A549 (cell line): ENCODE measurements at regions of chr7 and their contacts with region 1.

Region 1: DNA sequence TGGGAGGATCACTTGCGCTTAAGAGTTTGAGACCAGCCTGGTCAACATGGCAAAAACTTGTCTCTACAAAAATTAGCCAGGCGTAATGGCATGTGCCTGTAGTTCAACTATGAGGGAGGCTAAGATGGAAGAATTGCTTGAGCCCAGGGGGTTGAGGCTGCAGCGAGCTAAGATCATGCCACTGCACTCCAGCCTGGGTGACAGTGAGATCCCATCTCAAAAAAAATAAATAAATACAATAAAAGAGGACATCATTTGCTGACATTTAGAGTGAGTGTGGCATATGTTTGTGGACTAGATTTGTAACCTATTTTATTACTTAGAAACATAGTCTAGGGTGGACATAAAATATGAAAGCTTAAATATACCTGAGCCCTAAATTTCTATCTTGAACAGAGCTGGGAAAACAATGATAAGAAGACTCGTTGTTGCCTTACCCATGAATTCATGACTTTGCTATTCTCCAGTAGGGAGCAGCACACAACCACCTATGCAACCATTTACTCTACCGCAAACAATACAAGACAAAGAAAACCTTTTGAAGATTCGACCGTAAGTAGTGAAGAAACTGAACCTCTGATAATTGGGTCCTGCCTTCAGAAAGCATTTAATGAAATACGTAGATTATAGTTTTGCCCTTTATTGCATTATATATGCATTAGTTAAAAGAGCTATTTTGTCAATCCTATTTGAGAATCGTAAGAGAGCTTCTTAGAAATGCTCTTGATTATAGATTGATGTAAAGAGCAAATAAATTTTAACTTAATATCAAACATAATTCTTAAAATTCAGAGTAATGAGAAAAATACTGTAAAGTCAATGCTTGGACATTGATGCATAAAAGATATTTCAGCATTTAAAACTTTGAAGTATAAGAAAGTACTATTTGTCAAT is 83.5 kb downstream of the GNAT3 start:
- DNase-seq: peak; percentile 28 to 79
- ATAC-seq: peak; percentile 96 to 97
- H3K4me3 ChIP-seq: no peak overlapping the region
- H3K27ac ChIP-seq: peak overlapping the region in 1 of 2 experiments; percentile 45; a peak in 1 of 6 replicates
- H3K4me1 ChIP-seq: peaks cover 13% of the 10 kb centered on the region; the same call in 2 of the 3 replicates
- CTCF ChIP-seq: peak; percentile 90
- EP300 ChIP-seq: no peak
- POLR2A ChIP-seq: no peak
- RAD21 ChIP-seq: peak; percentile 94 to 96

Region 2: DNA sequence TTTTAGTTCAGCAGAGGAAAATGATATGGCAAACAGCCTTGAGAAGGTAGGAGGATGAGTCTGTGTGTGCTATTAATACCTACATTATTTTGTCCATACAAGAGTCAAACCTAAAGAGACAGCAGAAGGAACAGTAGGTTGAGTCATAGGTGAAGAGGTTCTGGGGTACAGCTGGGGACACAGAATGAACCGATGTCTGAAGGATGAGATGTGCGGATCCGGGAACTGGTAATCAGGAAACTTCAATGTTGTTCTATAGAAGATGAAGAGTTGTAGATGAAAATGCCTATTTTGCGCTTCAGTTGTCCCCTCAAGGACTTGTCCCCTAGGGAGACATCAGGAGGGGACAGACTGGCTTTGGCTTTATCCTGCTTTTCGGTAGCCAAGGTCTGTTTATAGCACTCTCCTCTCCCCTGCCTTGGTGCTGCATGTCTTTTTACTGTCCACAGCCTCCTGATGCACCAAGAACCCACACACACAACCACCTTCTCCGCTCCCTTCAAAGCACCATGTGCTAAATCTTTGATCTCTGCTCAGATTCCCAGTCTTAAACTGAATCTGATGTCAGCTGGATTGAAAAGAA is 11.1 kb before region 1 on chr7:
- CTCF ChIA-PET with region 1: interaction called, 15 read pairs
- POLR2A ChIA-PET with region 1: no interaction called
- DNase-seq: no peak
- ATAC-seq: no peak
- H3K4me3 ChIP-seq: no peak overlapping the region
- H3K27ac ChIP-seq: no peak overlapping the region
- H3K4me1 ChIP-seq: 0 out of 3 replicates have a peak, but pooled peaks cover 3% of the 10 kb centered on the region
- CTCF ChIP-seq: no peak
- EP300 ChIP-seq: no peak
- POLR2A ChIP-seq: no peak
- RAD21 ChIP-seq: no peak

Region 3: DNA sequence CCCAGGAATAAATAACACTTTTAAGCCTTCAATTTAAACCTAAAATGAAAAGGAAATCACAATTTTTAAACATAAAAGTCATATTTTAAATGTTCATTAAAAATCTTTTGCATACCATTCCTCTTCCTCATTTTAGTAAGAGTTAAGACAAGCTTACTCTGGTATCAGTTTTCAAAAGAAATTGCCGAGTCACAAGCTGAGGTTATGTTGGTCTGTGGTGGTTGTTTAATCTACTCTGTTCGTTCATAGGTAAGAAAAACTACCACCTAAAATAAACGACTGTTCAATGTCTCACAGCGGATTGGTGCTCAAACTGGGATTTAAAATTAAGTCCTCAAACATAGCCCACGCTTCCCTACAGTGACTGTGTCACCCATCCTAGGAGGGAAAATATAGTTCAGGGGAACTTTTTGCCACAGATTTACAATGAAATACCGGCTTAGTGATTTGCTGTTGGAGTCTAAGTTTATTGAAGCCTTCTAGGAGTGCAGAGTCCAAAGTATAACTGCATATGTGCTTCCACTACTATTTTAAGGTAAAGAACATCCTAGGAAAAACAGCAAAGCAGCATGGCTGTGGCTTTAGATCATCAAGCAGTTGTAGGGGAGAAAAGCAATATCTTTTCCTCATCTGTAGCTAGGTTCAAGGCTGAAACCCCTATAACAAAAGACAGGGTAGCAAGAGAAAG is 22.4 kb after region 1 on chr7:
- CTCF ChIA-PET with region 1: interaction called, 18 read pairs
- POLR2A ChIA-PET with region 1: no interaction called
- DNase-seq: peak in 1 of 2 experiments; percentile 25
- ATAC-seq: no peak; a peak in 2 of 6 replicates
- H3K4me3 ChIP-seq: no peak overlapping the region
- H3K27ac ChIP-seq: peak overlapping the region; percentile 27 to 57; a peak in 5 of 6 replicates
- H3K4me1 ChIP-seq: peaks cover 16% of the 10 kb centered on the region
- CTCF ChIP-seq: no peak
- EP300 ChIP-seq: no peak
- POLR2A ChIP-seq: no peak
- RAD21 ChIP-seq: no peak

Region 4: GRCh38 chr7:80659120-80660055 is 231.0 kb after region 1 on chr7:
- CTCF ChIA-PET with region 1: interaction called, 44 read pairs
- POLR2A ChIA-PET with region 1: no interaction called
- DNase-seq: peak; percentile 26 to 30
- ATAC-seq: peak; percentile 47 to 60; a peak in 2 of 6 replicates
- H3K4me3 ChIP-seq: no peak overlapping the region
- H3K27ac ChIP-seq: peak overlapping the region; percentile 19 to 42; a peak in 2 of 6 replicates
- H3K4me1 ChIP-seq: peaks cover 5% of the 10 kb centered on the region; the same call in 2 of the 3 replicates
- CTCF ChIP-seq: peak; percentile 76
- EP300 ChIP-seq: no peak
- POLR2A ChIP-seq: no peak
- RAD21 ChIP-seq: peak; percentile 78 to 87

Region 5: GRCh38 chr7:81469869-81470723 is 1041.7 kb after region 1 on chr7:
- CTCF ChIA-PET with region 1: interaction called, 35 read pairs
- POLR2A ChIA-PET with region 1: no interaction called
- DNase-seq: peak; percentile 52 to 90
- ATAC-seq: peak; percentile 90 to 97
- H3K4me3 ChIP-seq: no peak overlapping the region
- H3K27ac ChIP-seq: peak overlapping the region; percentile 49 to 82
- H3K4me1 ChIP-seq: peaks cover 20% of the 10 kb centered on the region
- CTCF ChIP-seq: peak; percentile 92
- EP300 ChIP-seq: no peak
- POLR2A ChIP-seq: no peak
- RAD21 ChIP-seq: peak; percentile 96 to 97